ENCODE measurements at regions of chr19 and their contacts with region 1.

Region 1: GRCh38 chr19:27974082-27974513 is 1238.9 kb downstream of the UQCRFS1 start:
- DNase-seq: no peak
- ATAC-seq: peak in 1 of 8 donors; percentile 57
- H3K4me3 ChIP-seq: no peak overlapping the region
- H3K27ac ChIP-seq: no peak overlapping the region
- H3K4me1 ChIP-seq: no peaks in the 10 kb centered on the region
- H3K27me3 ChIP-seq: peaks cover 0 to 8% (median 0%) of the 10 kb centered on the region in 7 donors
- CTCF ChIP-seq: peak in 8 of 9 donors; percentile 36 to 70 (median 63)

Region 2: GRCh38 chr19:28316463-28316862 is 342.4 kb after region 1 on chr19:
- intact Hi-C with region 1: loop called in 2 of 10 experiments (anchors 5 kb)
- DNase-seq: no peak
- ATAC-seq: no peak
- H3K4me3 ChIP-seq: no peak overlapping the region
- H3K27ac ChIP-seq: no peak overlapping the region
- H3K4me1 ChIP-seq: peaks cover 0 to 15% (median 0%) of the 10 kb centered on the region in 9 donors
- H3K27me3 ChIP-seq: peaks cover 0 to 7% (median 0%) of the 10 kb centered on the region in 7 donors
- CTCF ChIP-seq: no peak

Region 3: GRCh38 chr19:28466107-28467045 is 492.3 kb after region 1 on chr19:
- intact Hi-C with region 1: loop called in 1 of 10 experiments (anchors 5 kb)
- DNase-seq: peak; percentile 45 to 58
- ATAC-seq: peak in 3 of 8 donors; percentile 11 to 57 (median 42)
- H3K4me3 ChIP-seq: no peak overlapping the region
- H3K27ac ChIP-seq: no peak overlapping the region
- H3K4me1 ChIP-seq: peaks cover 0 to 19% (median 4%) of the 10 kb centered on the region in 9 donors
- H3K27me3 ChIP-seq: peaks cover 0 to 30% (median 8%) of the 10 kb centered on the region in 7 donors
- CTCF ChIP-seq: peak; percentile 57 to 88 (median 79)

Region 4: DNA sequence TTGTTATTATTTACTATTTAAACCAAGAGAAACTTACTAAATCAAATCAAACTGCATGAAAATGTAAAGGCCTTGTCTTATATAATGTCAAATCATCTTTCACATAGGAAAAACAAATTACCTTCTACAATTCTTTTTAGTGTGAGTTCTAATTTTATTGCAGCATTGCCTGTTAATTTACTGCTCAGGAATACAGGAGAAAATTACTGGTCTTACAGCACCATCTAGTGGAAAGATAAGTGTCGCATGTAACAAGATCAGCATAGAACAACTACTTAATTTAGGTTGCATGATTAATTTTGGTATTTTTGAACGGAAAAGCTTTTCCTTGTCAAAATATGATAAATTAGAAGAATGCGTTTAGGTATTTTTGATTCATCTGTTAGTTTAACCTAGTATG is 736.2 kb after region 1 on chr19:
- intact Hi-C with region 1: loop called in 6 of 10 experiments (anchors 5 to 10 kb)
- DNase-seq: no peak
- ATAC-seq: no peak
- H3K4me3 ChIP-seq: no peak overlapping the region
- H3K27ac ChIP-seq: no peak overlapping the region
- H3K4me1 ChIP-seq: no peaks in the 10 kb centered on the region
- H3K27me3 ChIP-seq: peaks cover 0 to 8% (median 0%) of the 10 kb centered on the region in 7 donors
- CTCF ChIP-seq: peak; percentile 34 to 79 (median 71)